ENCODE measurements at regions of chr5 and their contacts with region 1.

Region 1: DNA sequence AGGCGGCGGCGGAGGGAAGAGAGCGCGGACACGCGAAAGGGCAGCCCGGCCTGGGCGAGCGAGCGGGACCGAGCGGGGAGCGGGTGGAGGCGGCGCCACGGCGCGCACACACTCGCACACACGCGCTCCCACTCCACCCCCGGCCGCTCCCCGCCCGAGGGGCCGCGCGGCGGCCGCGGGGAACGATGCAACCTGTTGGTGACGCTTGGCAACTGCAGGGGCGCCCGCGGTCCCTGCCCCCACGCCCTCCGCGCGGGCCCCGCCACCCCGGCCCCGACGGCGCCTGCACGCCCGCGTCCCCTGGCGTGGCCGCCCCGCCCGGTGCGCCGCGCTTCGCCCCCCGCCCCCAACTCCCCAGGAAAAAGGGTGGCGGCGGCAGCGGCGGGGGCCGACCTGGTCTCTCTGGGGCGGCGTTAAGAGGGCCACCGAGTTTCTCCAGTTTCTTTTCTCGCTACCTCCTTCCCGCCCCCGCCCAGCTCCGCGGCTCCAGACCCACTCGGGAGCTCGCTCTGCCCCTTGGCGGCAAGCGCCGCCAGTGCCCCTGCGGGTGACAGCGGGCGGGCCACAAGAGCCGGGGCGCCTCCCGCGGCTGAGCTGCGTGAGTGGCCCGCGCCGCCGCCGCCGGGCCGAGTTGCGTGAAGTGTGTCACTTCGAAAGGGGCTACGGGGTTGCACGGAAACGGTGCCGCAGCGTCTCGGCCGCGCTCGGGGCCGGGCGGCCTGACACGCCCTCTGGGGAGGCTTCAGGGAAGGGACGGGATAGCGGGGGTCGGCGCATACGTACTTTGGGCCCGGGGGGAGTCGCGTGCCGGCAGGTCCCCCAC is at the start of gene NR3C1:
- DNase-seq: peak; percentile 60 to 85
- H3K4me3 ChIP-seq: peak within 1 kb of the TSS; percentile 96
- H3K27ac ChIP-seq: peak within 1 kb of the TSS; percentile 94
- H3K4me1 ChIP-seq: peaks cover 29% of the 10 kb centered on the region
- H3K27me3 ChIP-seq: no peaks in the 10 kb centered on the region
- CTCF ChIP-seq: peak; percentile 39; the same call in 1 of the 2 replicates
- total RNA-seq, gene NR3C1: 48.8 and 52.8 TPM in 2 replicates

Region 2: GRCh38 chr5:142186857-142187594 is 1216.8 kb before region 1 on chr5:
- CTCF ChIA-PET with region 1: no interaction called
- POLR2A ChIA-PET with region 1: no interaction called
- intact Hi-C with region 1: no loop called
- DNase-seq: peak in 1 of 2 experiments; percentile 43
- H3K4me3 ChIP-seq: no peak overlapping the region
- H3K27ac ChIP-seq: no peak overlapping the region
- H3K4me1 ChIP-seq: peaks cover 6% of the 10 kb centered on the region; the same call in 1 of the 2 replicates
- H3K27me3 ChIP-seq: no peaks in the 10 kb centered on the region
- CTCF ChIP-seq: no peak

Region 3: GRCh38 chr5:142922223-142922952 is 481.4 kb before region 1 on chr5:
- CTCF ChIA-PET with region 1: no interaction called
- POLR2A ChIA-PET with region 1: no interaction called
- intact Hi-C with region 1: loop called (anchors 1 kb)
- DNase-seq: peak in 1 of 2 experiments; percentile 67
- H3K4me3 ChIP-seq: no peak overlapping the region
- H3K27ac ChIP-seq: no peak overlapping the region
- H3K4me1 ChIP-seq: peaks cover 11% of the 10 kb centered on the region
- H3K27me3 ChIP-seq: no peaks in the 10 kb centered on the region
- CTCF ChIP-seq: peak; percentile 70

Region 4: GRCh38 chr5:143106174-143106573 is 297.6 kb before region 1 on chr5:
- CTCF ChIA-PET with region 1: no interaction called
- POLR2A ChIA-PET with region 1: no interaction called
- intact Hi-C with region 1: loop called (anchors 1 kb)
- DNase-seq: peak; percentile 20 to 40
- H3K4me3 ChIP-seq: no peak overlapping the region
- H3K27ac ChIP-seq: no peak overlapping the region
- H3K4me1 ChIP-seq: peaks cover 22% of the 10 kb centered on the region
- H3K27me3 ChIP-seq: no peaks in the 10 kb centered on the region
- CTCF ChIP-seq: 0 out of 2 replicates have a peak, but pooled peaks have one; percentile 20

Region 5: DNA sequence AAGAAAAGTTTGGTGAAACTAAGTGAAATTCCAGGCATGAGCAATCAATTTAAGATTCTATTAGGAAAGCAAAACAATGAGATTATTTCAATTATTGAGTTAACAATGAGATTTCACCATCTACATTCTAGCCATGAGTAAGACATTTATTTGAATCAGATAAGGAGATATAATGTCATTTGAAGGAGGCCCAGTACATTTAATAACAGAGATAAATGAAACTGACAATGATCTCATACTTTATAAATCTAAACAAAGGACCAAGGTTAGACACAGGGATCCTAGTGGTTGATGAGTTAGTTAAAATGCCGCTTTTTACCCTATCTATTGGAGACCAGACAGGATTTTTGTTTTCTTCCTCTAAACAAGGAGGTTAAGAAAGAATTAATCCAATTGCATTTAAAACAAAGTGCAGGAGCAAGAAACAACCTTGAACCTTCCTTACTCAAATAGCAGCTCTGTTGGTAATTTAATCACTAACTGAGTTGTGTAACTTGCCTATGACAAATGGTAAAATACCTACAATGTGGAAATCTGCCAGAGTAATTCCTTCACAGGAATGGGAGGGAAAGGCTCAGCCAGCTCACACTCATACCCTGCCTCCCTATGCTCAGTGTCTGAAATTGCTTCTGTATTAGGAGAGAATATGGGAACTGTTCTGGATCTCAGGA is 103.2 kb after region 1 on chr5:
- CTCF ChIA-PET with region 1: no interaction called
- POLR2A ChIA-PET with region 1: interaction called, 3 read pairs
- intact Hi-C with region 1: loop called (anchors 2 kb)
- DNase-seq: peak; percentile 45 to 93
- H3K4me3 ChIP-seq: no peak overlapping the region
- H3K27ac ChIP-seq: peak overlapping the region; percentile 79
- H3K4me1 ChIP-seq: peaks cover 36% of the 10 kb centered on the region
- H3K27me3 ChIP-seq: no peaks in the 10 kb centered on the region
- CTCF ChIP-seq: no peak

Region 6: GRCh38 chr5:143679777-143680176 is 276.0 kb after region 1 on chr5:
- CTCF ChIA-PET with region 1: no interaction called
- POLR2A ChIA-PET with region 1: no interaction called
- intact Hi-C with region 1: loop called (anchors 5 kb)
- DNase-seq: peak in 1 of 2 experiments; percentile 54
- H3K4me3 ChIP-seq: no peak overlapping the region
- H3K27ac ChIP-seq: no peak overlapping the region
- H3K4me1 ChIP-seq: peaks cover 11% of the 10 kb centered on the region
- H3K27me3 ChIP-seq: no peaks in the 10 kb centered on the region
- CTCF ChIP-seq: no peak

Region 7: GRCh38 chr5:143968011-143968878 is 564.4 kb after region 1 on chr5:
- CTCF ChIA-PET with region 1: no interaction called
- POLR2A ChIA-PET with region 1: no interaction called
- intact Hi-C with region 1: loop called (anchors 5 kb)
- DNase-seq: peak; percentile 21 to 79
- H3K4me3 ChIP-seq: no peak overlapping the region
- H3K27ac ChIP-seq: peak overlapping the region; percentile 47; the same call in 1 of the 2 replicates
- H3K4me1 ChIP-seq: peaks cover 46% of the 10 kb centered on the region
- H3K27me3 ChIP-seq: no peaks in the 10 kb centered on the region
- CTCF ChIP-seq: peak; percentile 68

Region 8: GRCh38 chr5:143992496-143992895 is 588.7 kb after region 1 on chr5:
- CTCF ChIA-PET with region 1: no interaction called
- POLR2A ChIA-PET with region 1: no interaction called
- intact Hi-C with region 1: no loop called
- DNase-seq: no peak
- H3K4me3 ChIP-seq: no peak overlapping the region
- H3K27ac ChIP-seq: no peak overlapping the region
- H3K4me1 ChIP-seq: no peaks in the 10 kb centered on the region
- H3K27me3 ChIP-seq: no peaks in the 10 kb centered on the region
- CTCF ChIP-seq: no peak